Activated T-helper 2 cell treated with anti-CD3 and anti-CD28 coated beads, Interferon-gamma antibody, Interleukin-2, Interleukin-4, amounts not matched to agents 10 μg/mL and 5 μg/mL and 100 μg/mL, durations not matched to agents 14 hours and 24 hours and 36 hours (primary cell): ENCODE measurements at regions of chr19 and their contacts with region 1.

Region 1: GRCh38 chr19:55632463-55632834 is 8.1 kb upstream of the ZNF784 start:
- DNase-seq: peak; percentile 74
- H3K4me3 Mint-ChIP-seq: no peak overlapping the region
- H3K27ac Mint-ChIP-seq: peak overlapping the region; percentile 30
- H3K4me1 Mint-ChIP-seq: peaks cover 33% of the 10 kb centered on the region
- H3K27me3 Mint-ChIP-seq: peaks cover 4% of the 10 kb centered on the region

Region 2: GRCh38 chr19:53808710-53809125 is 1823.7 kb before region 1 on chr19:
- intact Hi-C with region 1: no loop called
- DNase-seq: no peak
- H3K4me3 Mint-ChIP-seq: no peak overlapping the region
- H3K27ac Mint-ChIP-seq: no peak overlapping the region
- H3K4me1 Mint-ChIP-seq: no peaks in the 10 kb centered on the region
- H3K27me3 Mint-ChIP-seq: no peaks in the 10 kb centered on the region

Region 3: GRCh38 chr19:55461259-55461973 is 171.0 kb before region 1 on chr19 and contains the start of gene ISOC2:
- intact Hi-C with region 1: loop called (anchors 5 kb)
- DNase-seq: peak; percentile 100
- H3K4me3 Mint-ChIP-seq: peak within 1 kb of the TSS; percentile 85
- H3K27ac Mint-ChIP-seq: peak within 1 kb of the TSS; percentile 73
- H3K4me1 Mint-ChIP-seq: peaks cover 16% of the 10 kb centered on the region
- H3K27me3 Mint-ChIP-seq: no peaks in the 10 kb centered on the region
- total RNA-seq, gene ISOC2: 30.4 and 34.8 TPM in 2 replicates

Region 4: DNA sequence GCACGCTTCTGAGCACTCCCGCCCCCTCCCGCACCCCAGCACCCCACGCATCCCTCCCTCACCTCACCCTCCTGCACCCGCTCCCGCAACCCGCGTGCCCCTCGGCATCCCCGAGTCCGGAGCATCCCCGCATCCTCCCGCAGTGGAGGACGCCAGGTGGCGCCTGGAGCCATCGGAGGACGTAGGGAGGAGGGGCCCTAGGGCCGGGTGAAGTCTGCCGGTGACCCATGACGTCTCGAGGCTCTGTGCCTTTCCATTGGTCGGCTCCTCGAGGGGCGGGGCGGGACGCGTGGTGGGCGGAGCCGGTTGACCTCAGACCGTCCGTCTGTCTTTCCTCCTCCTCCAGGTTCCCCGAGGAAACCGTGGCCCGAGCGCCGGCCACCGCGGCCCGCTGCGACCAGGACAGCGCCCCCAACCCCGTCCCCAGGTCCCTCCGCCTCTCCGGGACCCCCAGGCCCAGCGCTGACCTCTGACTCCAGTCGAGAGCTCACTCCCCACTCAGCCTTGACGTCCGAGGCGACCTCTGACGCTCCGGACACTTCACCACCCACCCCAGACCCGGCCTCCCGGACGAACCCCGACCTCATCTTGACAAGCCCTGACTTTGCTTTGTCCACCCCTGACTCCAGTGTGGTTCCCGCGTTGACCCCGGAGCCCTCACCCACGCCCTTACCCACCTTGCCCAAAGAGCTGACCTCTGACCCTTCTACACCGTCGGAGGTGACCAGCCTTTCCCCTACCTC is 115.4 kb before region 1 on chr19:
- intact Hi-C with region 1: loop called (anchors 1 kb)
- DNase-seq: peak; percentile 86
- H3K4me3 Mint-ChIP-seq: peak overlapping the region; percentile 67
- H3K27ac Mint-ChIP-seq: peak overlapping the region; percentile 59
- H3K4me1 Mint-ChIP-seq: peaks cover 2% of the 10 kb centered on the region
- H3K27me3 Mint-ChIP-seq: peaks cover 3% of the 10 kb centered on the region

Region 5: DNA sequence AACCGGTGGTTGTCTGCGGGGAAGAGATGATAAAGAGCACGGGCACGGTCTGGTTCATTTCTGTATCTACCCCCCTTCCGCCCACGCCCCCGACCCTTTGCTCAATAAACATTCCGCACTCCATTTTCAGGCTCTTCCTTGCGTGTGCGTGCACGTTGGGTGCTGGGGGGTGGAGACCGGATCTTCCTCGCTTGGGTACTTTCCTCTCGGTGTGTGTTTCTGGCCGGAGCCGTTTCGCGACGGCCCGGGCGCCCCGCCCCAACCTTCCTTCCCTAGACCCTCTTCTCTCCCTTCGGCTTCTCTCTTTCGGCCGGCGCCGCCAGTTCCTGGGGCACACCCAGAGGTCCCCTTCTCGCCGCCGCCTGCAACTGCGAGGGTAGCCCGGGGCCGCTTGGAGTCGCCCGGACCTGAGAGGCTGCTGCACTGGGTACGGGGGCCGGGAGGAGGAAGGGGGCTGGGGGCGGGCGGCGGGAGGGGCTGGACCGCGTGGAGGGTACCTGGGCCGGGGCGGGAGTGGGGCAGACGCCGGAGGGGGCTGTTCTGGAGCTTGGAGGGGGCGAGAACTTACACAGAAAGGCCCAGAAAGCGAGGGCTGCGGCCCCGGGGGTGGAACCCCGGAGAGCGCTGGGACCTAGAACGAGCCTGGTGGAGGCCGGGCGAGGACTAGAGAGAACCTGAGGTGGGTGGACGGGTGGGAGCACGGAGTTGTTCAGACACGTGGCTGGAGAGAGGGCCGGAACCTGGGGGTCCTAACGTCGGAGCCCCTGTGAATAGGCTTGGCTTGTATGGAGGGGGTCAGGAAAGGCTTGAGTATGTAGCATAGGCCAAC is 11.1 kb after region 1 on chr19 and contains the start of gene ZNF581:
- intact Hi-C with region 1: loop called (anchors 1 kb)
- DNase-seq: peak; percentile 77
- H3K4me3 Mint-ChIP-seq: peak within 1 kb of the TSS; percentile 99
- H3K27ac Mint-ChIP-seq: peak within 1 kb of the TSS; percentile 97
- H3K4me1 Mint-ChIP-seq: peaks cover 36% of the 10 kb centered on the region
- H3K27me3 Mint-ChIP-seq: no peaks in the 10 kb centered on the region
- total RNA-seq, gene ZNF581: 26.6 and 27.0 TPM in 2 replicates

Region 6: GRCh38 chr19:55653758-55654539 is 21.5 kb after region 1 on chr19:
- intact Hi-C with region 1: loop called (anchors 1 kb)
- DNase-seq: peak; percentile 99
- H3K4me3 Mint-ChIP-seq: peak overlapping the region; percentile 91
- H3K27ac Mint-ChIP-seq: peak overlapping the region; percentile 99
- H3K4me1 Mint-ChIP-seq: peaks cover 27% of the 10 kb centered on the region
- H3K27me3 Mint-ChIP-seq: no peaks in the 10 kb centered on the region

Region 7: GRCh38 chr19:55809381-55810058 is 177.1 kb after region 1 on chr19:
- intact Hi-C with region 1: loop called (anchors 5 kb)
- DNase-seq: no peak
- H3K4me3 Mint-ChIP-seq: no peak overlapping the region
- H3K27ac Mint-ChIP-seq: no peak overlapping the region
- H3K4me1 Mint-ChIP-seq: no peaks in the 10 kb centered on the region
- H3K27me3 Mint-ChIP-seq: no peaks in the 10 kb centered on the region